ENCODE measurements at regions of chr2 and their contacts with region 1.

Region 1: DNA sequence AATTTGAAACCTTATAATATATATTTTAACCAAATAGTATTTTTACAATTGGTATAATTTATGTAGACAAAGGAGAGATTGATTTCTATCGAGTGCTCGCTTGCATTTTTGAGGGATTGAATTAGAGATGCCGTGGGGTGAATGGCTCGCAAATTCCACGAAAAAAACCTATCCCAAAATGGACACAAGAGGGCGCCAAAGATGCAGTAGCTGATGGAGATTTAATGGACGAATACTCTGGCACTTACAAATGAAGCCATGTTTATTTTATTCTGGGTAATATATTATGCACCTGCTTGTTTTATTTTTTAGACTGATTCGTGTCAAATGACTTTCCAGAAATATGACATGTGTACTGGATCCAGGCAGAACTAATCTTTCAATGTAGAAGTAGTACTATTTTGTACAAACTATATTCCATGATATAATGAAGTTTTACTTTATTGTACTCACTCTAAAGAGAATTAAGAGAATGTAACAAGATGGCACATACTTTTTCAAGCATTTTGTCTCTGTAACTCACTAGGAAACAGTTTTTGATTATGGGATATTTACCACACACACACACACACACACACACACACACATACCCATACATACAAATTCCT is 505.4 kb downstream of the PLCL1 start:
- DNase-seq: peak; percentile 37
- ATAC-seq: peak in 1 of 2 experiments; percentile 77; a peak in 3 of 6 replicates
- H3K4me3 ChIP-seq: no peak overlapping the region
- H3K27ac ChIP-seq: no peak overlapping the region
- H3K4me1 ChIP-seq: no peaks in the 10 kb centered on the region
- CTCF ChIP-seq: peak; percentile 82
- EP300 ChIP-seq: no peak
- POLR2A ChIP-seq: no peak
- RAD21 ChIP-seq: peak; percentile 58 to 62; a peak in 4 of 5 replicates

Region 2: DNA sequence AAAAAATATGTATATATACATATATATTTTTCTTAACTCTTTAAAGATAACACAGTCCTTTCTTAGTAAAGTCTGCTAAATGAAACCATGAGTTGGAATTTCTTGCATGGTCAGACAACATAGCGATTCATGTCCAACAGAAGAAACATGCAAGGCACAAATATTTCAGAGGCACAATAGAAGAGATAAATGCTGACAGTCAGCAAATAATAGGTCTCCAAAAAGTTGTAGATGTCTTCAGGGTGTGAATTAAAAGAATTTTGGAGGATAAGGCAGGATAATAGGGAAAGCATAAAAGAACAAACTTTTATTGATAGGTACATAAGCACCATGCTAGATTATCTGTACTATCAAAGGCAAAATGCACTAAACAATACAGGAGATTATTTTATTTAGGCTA is 294.8 kb after region 1 on chr2:
- CTCF ChIA-PET with region 1: no interaction called
- POLR2A ChIA-PET with region 1: no interaction called
- DNase-seq: no peak
- ATAC-seq: no peak
- H3K4me3 ChIP-seq: no peak overlapping the region
- H3K27ac ChIP-seq: no peak overlapping the region
- H3K4me1 ChIP-seq: no peaks in the 10 kb centered on the region
- CTCF ChIP-seq: no peak
- EP300 ChIP-seq: no peak
- POLR2A ChIP-seq: no peak
- RAD21 ChIP-seq: no peak

Region 3: GRCh38 chr2:199596549-199596948 is 1286.8 kb after region 1 on chr2:
- CTCF ChIA-PET with region 1: interaction called, 11 read pairs
- POLR2A ChIA-PET with region 1: no interaction called
- DNase-seq: peak; percentile 6 to 44
- ATAC-seq: peak; percentile 71 to 89; a peak in 4 of 6 replicates
- H3K4me3 ChIP-seq: no peak overlapping the region
- H3K27ac ChIP-seq: no peak overlapping the region
- H3K4me1 ChIP-seq: no peaks in the 10 kb centered on the region
- CTCF ChIP-seq: peak; percentile 54
- EP300 ChIP-seq: no peak
- POLR2A ChIP-seq: no peak
- RAD21 ChIP-seq: peak; percentile 32 to 37; a peak in 2 of 5 replicates

Measured in A549 (cell line).